ENCODE measurements at regions of chr3 and their contacts with region 1.

Region 1: DNA sequence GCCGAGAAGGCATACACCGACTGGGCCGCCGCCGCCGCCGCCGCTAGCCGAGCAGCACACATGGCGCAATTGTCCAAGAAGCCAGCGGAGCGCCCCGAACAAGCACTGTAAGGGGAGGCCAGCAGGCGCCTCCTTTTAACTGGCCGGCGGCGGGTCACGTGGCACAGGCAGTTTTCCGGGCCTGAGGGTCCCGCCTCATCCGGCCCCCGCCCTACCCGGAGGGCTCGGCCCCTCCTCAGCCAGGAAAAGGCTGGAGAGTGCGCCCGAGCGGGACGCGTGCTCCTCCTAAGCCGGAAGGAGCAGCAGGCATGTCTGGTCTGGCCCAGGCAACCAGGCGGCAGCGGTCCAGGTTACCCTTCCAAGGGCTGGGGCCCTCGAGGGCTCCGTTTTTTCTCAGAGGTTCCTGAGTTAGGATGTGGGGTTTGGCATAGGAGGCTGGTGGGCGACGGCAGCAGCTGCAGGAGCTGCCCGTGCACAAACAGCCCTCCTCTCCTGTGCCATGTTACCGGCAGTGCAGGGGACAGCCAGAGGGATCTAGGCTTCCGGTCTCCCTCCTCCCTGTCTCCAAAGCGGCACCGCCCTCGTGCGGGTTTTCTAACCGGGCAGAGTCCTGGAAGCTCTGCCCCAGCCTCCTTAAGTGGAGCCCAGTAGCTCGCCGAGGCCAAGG is at the start of gene GPX1:
- DNase-seq: peak; percentile 97
- H3K4me3 ChIP-seq: peak within 1 kb of the TSS; percentile 51 to 77 (median 66)
- H3K27ac ChIP-seq: peak within 1 kb of the TSS; percentile 85
- H3K4me1 ChIP-seq: peaks cover 33% of the 10 kb centered on the region
- H3K27me3 ChIP-seq: no peaks in the 10 kb centered on the region
- CTCF ChIP-seq: no peak
- total RNA-seq, gene GPX1: 275 to 607 TPM

Region 2: GRCh38 chr3:49313896-49314688 is 44.3 kb before region 1 on chr3:
- CTCF ChIA-PET with region 1: no interaction called
- dilution Hi-C with region 1: no loop called
- in situ Hi-C with region 1: no loop called
- intact Hi-C with region 1: no loop called
- DNase-seq: peak; percentile 23
- H3K4me3 ChIP-seq: no peak overlapping the region
- H3K27ac ChIP-seq: no peak overlapping the region
- H3K4me1 ChIP-seq: peaks cover 4% of the 10 kb centered on the region
- H3K27me3 ChIP-seq: no peaks in the 10 kb centered on the region
- CTCF ChIP-seq: no peak

Region 3: GRCh38 chr3:49339945-49340800 is 18.2 kb before region 1 on chr3 and contains the start of gene USP4:
- CTCF ChIA-PET with region 1: interaction called, 3 read pairs
- dilution Hi-C with region 1: no loop called
- in situ Hi-C with region 1: no loop called
- intact Hi-C with region 1: loop called (anchors 1 kb)
- DNase-seq: peak; percentile 85
- H3K4me3 ChIP-seq: peak within 1 kb of the TSS; percentile 68 to 86 (median 83)
- H3K27ac ChIP-seq: peak within 1 kb of the TSS; percentile 67
- H3K4me1 ChIP-seq: peaks cover 15% of the 10 kb centered on the region
- H3K27me3 ChIP-seq: no peaks in the 10 kb centered on the region
- CTCF ChIP-seq: peak; percentile 31 to 58
- total RNA-seq, gene USP4: 19.0 to 54.6 TPM

Region 4: DNA sequence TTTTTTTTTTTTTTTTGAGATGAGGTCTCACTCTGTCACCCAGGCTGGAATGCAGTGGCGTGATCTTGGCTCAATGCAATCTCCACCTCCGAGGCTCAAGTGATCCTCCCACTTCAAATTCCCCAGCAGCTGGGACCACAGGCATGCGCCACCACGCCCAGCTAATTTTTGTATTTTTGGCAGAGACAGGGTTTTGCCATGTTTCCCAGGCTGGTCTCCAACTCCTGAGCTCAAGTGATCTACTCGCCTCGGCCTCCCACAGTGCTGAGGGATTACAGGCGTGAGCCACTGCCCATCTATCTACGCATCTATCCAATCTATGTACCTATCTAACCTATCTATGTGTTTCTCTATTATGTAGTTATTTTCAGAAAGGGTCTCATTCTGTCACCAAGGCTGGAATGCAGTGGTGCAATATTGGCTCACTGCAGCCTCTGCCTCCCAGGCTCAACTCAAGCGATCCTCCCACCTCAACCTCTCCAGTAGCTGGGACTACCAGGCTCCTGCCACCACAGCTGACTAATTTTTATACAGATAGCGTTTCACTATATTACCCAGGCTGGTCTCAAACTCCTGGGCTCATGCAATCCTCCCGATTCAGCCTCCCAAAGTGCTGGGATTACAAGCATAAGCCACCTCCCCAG is 20.0 kb after region 1 on chr3:
- CTCF ChIA-PET with region 1: interaction called, 7 read pairs
- dilution Hi-C with region 1: no loop called
- in situ Hi-C with region 1: no loop called
- intact Hi-C with region 1: loop called (anchors 2 kb)
- DNase-seq: peak; percentile 86
- H3K4me3 ChIP-seq: no peak overlapping the region
- H3K27ac ChIP-seq: peak overlapping the region; percentile 64
- H3K4me1 ChIP-seq: peaks cover 21% of the 10 kb centered on the region
- H3K27me3 ChIP-seq: no peaks in the 10 kb centered on the region
- CTCF ChIP-seq: no peak